Posterior vena cava (tissue), 2 donors: ENCODE measurements at regions of chr10 and their contacts with region 1.

Region 1: GRCh38 chr10:124106241-124106879 is 13.0 kb upstream of the CHST15 start:
- DNase-seq: peak; percentile 89

Region 2: GRCh38 chr10:124049484-124049883 is 56.9 kb before region 1 on chr10:
- intact Hi-C with region 1: no loop called
- DNase-seq: peak; percentile 30

Region 3: DNA sequence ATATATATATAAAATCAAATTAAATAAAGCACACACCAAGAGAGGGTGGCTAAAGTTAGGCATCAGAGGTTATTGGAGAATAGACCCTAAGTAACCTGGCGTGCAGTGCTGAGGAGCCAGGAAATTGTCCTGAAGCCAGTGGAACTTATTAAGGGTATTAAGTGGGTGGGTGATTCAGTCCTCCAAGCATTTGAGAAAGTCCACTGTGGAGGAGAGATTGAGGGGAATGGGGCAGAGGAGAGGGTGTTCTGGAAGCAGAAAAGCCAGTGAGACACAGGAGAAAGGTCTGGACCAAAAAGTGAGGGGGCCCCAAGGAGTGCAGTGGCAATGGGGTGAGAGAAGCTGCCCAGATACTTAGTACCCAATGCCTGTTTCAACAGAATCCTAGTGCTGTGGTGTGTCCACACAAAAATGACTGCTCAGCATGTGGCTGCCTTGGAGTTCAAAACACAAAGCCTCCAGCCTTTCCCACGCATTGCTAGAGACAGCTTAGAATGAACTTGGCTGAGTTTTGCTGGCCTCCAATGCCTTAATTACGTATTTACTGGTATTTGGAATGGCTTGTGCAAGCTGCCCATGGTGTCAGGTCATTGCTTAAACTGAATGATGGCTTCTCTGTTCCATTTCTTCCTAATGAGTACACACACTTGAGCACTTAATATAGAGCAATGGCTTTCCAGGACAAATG is 32.0 kb after region 1 on chr10:
- intact Hi-C with region 1: loop called in 1 of 2 experiments (anchors 2 kb)
- DNase-seq: no peak

Region 4: GRCh38 chr10:124249812-124250432 is 143.6 kb after region 1 on chr10:
- intact Hi-C with region 1: loop called in 1 of 2 experiments (anchors 2 kb)
- DNase-seq: no peak